Right ventricle myocardium inferior (tissue), 1 donor: ENCODE measurements at regions of chr12 and their contacts with region 1.

Region 1: GRCh38 chr12:109264943-109265650 is 44.0 kb downstream of the FOXN4 start:
- DNase-seq: no peak
- ATAC-seq: no peak

Region 2: GRCh38 chr12:108856428-108857157 is 408.5 kb before region 1 on chr12:
- intact Hi-C with region 1: no loop called
- DNase-seq: peak; percentile 90
- ATAC-seq: peak; percentile 62

Region 3: DNA sequence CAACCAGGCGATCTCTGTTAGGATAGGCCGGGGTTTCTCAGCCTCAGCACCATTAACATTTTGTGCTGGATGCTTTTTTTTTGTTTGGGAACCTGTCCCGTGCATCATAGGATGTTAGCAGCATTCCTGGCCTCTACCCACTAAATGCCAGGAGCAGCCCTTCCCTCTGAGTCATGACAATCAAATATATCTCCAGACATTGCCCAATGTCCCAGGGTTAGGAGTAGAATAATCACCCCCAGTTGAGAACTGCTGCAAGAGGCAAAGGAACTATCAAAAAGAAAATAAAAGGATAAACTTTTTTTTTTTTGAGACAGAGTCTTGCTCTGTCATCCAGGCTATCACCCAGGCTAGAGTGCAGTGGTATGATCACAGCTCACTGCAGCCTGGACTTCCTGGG is 72.7 kb before region 1 on chr12:
- intact Hi-C with region 1: no loop called
- DNase-seq: no peak
- ATAC-seq: peak; percentile 32

Region 4: GRCh38 chr12:109247831-109248654 is 17.1 kb before region 1 on chr12:
- intact Hi-C with region 1: no loop called
- DNase-seq: no peak
- ATAC-seq: no peak

Region 5: DNA sequence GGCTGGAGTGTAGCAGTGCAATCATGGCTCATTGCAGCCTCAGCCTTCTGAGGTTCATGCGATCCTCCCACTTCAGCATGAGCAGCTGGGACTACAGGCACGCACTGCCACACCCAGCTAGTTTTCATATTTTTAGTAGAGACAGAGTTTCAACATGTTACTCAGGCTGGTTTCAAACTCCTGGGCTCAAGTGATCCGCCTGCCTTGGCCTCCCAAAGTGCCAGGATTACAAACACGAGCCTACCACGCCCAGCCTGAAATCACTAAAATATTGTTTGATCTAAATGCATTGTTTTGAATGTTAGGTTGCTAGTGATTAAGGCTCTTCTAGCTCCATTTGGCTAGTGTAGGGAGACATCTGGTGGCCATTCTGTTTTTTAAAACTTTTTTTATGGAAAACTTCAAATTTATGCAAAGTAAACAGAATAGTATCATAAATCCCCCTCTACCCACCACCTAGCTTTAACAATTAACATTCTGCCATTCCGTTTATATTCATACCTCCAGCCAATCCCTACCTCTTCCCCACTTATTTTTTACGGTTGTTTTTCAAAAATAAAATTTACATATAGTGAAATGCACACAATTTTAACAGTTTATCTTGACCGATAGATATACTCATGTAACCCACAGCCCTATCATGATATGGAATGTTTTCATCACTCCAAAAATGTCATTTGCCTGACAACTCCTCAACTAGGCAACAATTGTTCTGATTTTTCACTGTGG is 120.4 kb after region 1 on chr12:
- intact Hi-C with region 1: loop called (anchors 1 kb)
- DNase-seq: no peak
- ATAC-seq: peak; percentile 69